Left ventricle myocardium superior (tissue), 1 donor: ENCODE measurements at regions of chr6 and their contacts with region 1.

Region 1: DNA sequence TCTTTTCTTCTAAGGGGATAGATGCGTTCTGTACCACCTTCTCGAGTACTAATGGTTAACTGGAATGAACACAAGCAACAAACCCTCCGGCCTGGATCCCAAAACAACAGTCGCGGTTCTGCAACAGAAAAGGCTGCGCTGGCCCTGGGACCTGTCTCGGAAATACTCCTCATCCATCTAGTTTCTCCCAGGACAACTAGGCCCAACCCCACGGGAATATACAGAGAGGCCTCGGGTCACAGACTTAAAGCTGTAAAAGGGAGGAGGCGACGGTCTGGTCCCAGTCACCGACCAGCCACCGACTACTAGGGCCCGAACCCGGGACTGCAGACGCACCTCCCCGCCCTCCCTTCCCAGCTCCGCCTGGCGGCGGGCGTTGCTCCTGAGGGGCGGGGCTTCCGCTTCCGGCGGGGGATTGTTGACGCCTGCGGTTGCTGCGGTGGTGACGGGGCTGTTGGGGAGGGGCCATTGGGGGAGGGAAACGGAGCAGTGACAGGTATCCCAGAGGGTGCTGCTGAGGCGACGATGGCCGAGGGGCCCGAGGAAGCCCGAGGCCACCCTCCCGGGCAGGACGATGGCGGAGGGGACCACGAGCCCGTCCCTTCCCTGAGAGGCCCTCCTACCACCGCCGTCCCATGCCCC is at the start of gene FAM8A1:
- DNase-seq: peak; percentile 96
- ATAC-seq: peak; percentile 98
- total RNA-seq, gene FAM8A1: 18.8 TPM

Region 2: DNA sequence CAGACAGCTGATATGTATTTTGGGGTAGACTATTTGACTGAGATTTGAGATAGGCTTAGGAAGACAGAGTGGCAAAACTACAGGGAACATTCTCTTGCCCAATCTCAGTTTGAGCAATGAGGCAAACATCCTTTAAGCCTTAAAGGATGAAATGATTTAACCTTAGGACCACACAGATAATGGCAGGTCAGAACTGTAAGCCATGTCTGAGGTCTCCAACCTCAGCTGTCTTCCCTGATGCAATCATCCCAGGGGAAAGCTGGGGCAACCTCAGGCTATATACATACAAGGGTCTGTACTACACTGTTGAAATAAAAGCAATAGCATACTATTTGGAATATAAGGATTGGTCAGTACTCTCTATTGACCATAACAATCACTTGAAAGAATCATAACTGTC is 190.5 kb after region 1 on chr6:
- intact Hi-C with region 1: loop called (anchors 10 kb)
- DNase-seq: no peak
- ATAC-seq: no peak